Activated naive CD8-positive, alpha-beta T cell treated with anti-CD3 and anti-CD28 coated beads, Interleukin-2, amount 10 ng/mL, durations not matched to agents 7 days and 5 days (primary cell): ENCODE measurements at regions of chr12 and their contacts with region 1.

Region 1: GRCh38 chr12:6944381-6945186 is 762 bp downstream of the C12orf57 start:
- DNase-seq: peak; percentile 87
- ATAC-seq: peak; percentile 44
- H3K4me3 Mint-ChIP-seq: peak overlapping the region; percentile 97
- H3K27ac Mint-ChIP-seq: peak overlapping the region; percentile 94
- H3K4me1 Mint-ChIP-seq: peaks cover 48% of the 10 kb centered on the region
- H3K27me3 Mint-ChIP-seq: no peaks in the 10 kb centered on the region

Region 2: GRCh38 chr12:6867413-6868210 is 77.0 kb before region 1 on chr12 and contains the start of gene TPI1:
- POLR2A ChIA-PET with region 1: interaction called, 48 read pairs
- DNase-seq: peak; percentile 85
- ATAC-seq: peak; percentile 65
- H3K4me3 Mint-ChIP-seq: peak within 1 kb of the TSS; percentile 95
- H3K27ac Mint-ChIP-seq: peak within 1 kb of the TSS; percentile 96
- H3K4me1 Mint-ChIP-seq: peaks cover 39% of the 10 kb centered on the region
- H3K27me3 Mint-ChIP-seq: no peaks in the 10 kb centered on the region
- total RNA-seq, gene TPI1: 1,129 to 1,200 TPM

Region 3: DNA sequence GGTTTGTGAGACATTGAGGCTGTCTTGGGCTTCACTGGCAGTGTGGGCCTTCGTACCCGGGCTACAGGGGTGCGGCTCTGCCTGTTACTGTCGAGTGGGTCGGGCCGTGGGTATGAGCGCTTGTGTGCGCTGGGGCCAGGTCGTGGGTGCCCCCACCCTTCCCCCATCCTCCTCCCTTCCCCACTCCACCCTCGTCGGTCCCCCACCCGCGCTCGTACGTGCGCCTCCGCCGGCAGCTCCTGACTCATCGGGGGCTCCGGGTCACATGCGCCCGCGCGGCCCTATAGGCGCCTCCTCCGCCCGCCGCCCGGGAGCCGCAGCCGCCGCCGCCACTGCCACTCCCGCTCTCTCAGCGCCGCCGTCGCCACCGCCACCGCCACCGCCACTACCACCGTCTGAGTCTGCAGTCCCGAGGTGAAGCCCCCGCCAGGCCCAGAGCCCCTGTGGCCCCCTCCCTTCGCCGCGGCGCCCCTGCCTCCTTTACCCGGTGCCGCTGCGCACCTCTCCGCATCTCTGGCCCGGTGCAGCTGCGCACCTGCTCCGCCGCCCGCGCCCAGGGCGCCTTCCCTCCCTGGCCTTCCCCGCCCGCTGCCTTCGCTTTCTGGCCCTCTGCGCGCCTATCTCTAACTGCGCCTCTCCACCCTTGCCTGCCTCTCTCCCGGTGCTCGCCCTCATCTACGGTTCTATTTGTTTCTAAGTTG is 30.2 kb before region 1 on chr12 and contains the start of gene ENO2:
- POLR2A ChIA-PET with region 1: interaction called, 13 read pairs
- DNase-seq: peak; percentile 87
- ATAC-seq: peak; percentile 92
- H3K4me3 Mint-ChIP-seq: peak within 1 kb of the TSS; percentile 100
- H3K27ac Mint-ChIP-seq: peak within 1 kb of the TSS; percentile 88
- H3K4me1 Mint-ChIP-seq: peaks cover 37% of the 10 kb centered on the region
- H3K27me3 Mint-ChIP-seq: no peaks in the 10 kb centered on the region
- total RNA-seq, gene ENO2: 231 to 242 TPM

Region 4: GRCh38 chr12:6965026-6965661 is 20.6 kb after region 1 on chr12:
- POLR2A ChIA-PET with region 1: interaction called, 1,055 read pairs
- DNase-seq: peak; percentile 85
- ATAC-seq: peak; percentile 61
- H3K4me3 Mint-ChIP-seq: no peak overlapping the region
- H3K27ac Mint-ChIP-seq: peak overlapping the region; percentile 51
- H3K4me1 Mint-ChIP-seq: peaks cover 46% of the 10 kb centered on the region
- H3K27me3 Mint-ChIP-seq: no peaks in the 10 kb centered on the region

Region 5: DNA sequence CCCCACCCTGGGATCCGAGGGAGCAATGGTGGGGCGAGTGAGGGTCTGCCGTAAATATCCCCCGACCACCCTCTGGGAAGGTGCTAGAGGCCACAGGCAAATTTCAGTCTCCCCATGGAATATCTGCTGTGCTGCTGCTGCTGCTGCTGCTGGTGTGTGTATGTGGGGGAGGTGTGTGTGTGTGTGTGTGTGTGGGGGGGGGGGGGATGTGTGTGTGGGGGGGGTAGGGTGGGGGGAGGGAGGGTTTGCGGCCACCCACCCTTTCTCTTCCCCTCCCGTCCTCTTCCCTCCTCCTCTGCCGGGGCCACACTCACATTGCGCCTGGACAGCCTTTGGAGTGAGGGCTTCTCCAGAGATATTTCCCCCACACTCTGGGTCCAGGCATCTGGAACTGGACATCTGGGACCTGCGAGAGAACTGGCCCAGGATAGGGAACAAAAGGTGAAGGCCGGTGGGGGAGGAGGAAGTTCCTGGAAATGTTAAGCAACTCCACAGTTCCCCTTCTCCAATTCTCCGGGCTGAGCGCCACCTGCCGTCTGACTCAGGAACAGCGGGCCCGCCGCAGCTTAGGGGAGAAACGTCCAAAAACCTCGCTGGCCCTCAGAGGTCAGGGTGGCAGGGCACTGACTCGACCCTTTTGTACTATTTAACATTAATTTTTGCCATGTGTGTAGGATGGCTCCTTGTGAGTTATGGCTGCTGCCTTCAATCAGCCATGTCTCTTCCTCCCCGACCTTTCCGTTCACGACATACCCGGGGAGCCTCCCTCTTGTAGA is 164.4 kb after region 1 on chr12 and contains the start of gene C1RL:
- POLR2A ChIA-PET with region 1: interaction called, 117 read pairs
- DNase-seq: peak; percentile 90
- ATAC-seq: peak; percentile 20
- H3K4me3 Mint-ChIP-seq: peak within 1 kb of the TSS; percentile 96
- H3K27ac Mint-ChIP-seq: peak within 1 kb of the TSS; percentile 95
- H3K4me1 Mint-ChIP-seq: peaks cover 39% of the 10 kb centered on the region
- H3K27me3 Mint-ChIP-seq: no peaks in the 10 kb centered on the region
- total RNA-seq, gene C1RL: 29.8 to 36.0 TPM